PC-9 (cell line): ENCODE measurements at regions of chr6 and their contacts with region 1.

Region 1: GRCh38 chr6:36459501-36459900 is 16.7 kb downstream of the KCTD20 start:
- DNase-seq: no peak
- H3K4me3 ChIP-seq: no peak overlapping the region
- H3K27ac ChIP-seq: no peak overlapping the region
- H3K4me1 ChIP-seq: peaks cover 10% of the 10 kb centered on the region
- H3K27me3 ChIP-seq: no peaks in the 10 kb centered on the region
- CTCF ChIP-seq: no peak

Region 2: GRCh38 chr6:36312854-36313648 is 146.4 kb before region 1 on chr6:
- CTCF ChIA-PET with region 1: no interaction called
- POLR2A ChIA-PET with region 1: interaction called, 13 read pairs
- intact Hi-C with region 1: no loop called
- DNase-seq: no peak
- H3K4me3 ChIP-seq: no peak overlapping the region
- H3K27ac ChIP-seq: peak overlapping the region; percentile 72
- H3K4me1 ChIP-seq: peaks cover 39% of the 10 kb centered on the region
- H3K27me3 ChIP-seq: no peaks in the 10 kb centered on the region
- CTCF ChIP-seq: no peak

Region 3: DNA sequence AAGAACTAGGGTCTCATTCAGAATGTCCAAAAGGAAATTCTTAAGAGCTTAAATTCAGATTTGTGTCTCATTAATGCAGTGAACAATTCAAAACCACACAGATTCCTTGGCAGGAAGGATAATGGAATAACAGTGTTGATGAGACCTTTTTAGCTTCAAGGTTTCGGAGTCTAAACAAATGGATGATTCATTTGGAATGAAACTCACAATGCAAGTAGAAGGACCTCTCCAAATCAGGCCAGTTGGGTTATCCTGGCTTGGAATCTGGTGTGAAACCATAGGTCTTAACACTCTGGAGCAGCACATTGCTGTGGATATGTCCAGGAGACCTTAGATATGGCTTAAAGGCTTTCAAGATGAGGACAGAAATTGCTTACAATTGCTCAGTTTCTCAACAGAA is 28.2 kb after region 1 on chr6:
- CTCF ChIA-PET with region 1: no interaction called
- POLR2A ChIA-PET with region 1: interaction called, 16 read pairs
- intact Hi-C with region 1: no loop called
- DNase-seq: no peak
- H3K4me3 ChIP-seq: no peak overlapping the region
- H3K27ac ChIP-seq: no peak overlapping the region
- H3K4me1 ChIP-seq: no peaks in the 10 kb centered on the region
- H3K27me3 ChIP-seq: no peaks in the 10 kb centered on the region
- CTCF ChIP-seq: no peak

Region 4: GRCh38 chr6:36526066-36526465 is 66.6 kb after region 1 on chr6:
- CTCF ChIA-PET with region 1: no interaction called
- POLR2A ChIA-PET with region 1: no interaction called
- intact Hi-C with region 1: no loop called
- DNase-seq: peak in 1 of 2 experiments; percentile 70
- H3K4me3 ChIP-seq: no peak overlapping the region
- H3K27ac ChIP-seq: peak overlapping the region; percentile 14; the same call in 1 of the 2 replicates
- H3K4me1 ChIP-seq: peaks cover 16% of the 10 kb centered on the region
- H3K27me3 ChIP-seq: no peaks in the 10 kb centered on the region
- CTCF ChIP-seq: no peak